B cell (primary cell): ENCODE measurements at regions of chr2 and their contacts with region 1.

Region 1: GRCh38 chr2:192675640-192676039 is 480.9 kb upstream of the TMEFF2 start:
- DNase-seq: no peak
- ATAC-seq: no peak
- H3K4me3 ChIP-seq: no peak overlapping the region
- H3K4me3 Mint-ChIP-seq: no peak overlapping the region
- H3K27ac ChIP-seq: no peak overlapping the region
- H3K27ac Mint-ChIP-seq: no peak overlapping the region
- H3K4me1 ChIP-seq: no peaks in the 10 kb centered on the region
- H3K4me1 Mint-ChIP-seq: no peaks in the 10 kb centered on the region
- H3K27me3 ChIP-seq: no peaks in the 10 kb centered on the region
- H3K27me3 Mint-ChIP-seq: no peaks in the 10 kb centered on the region
- CTCF ChIP-seq: no peak

Region 2: GRCh38 chr2:192634557-192634956 is 41.1 kb before region 1 on chr2:
- CTCF ChIA-PET with region 1: no interaction called
- POLR2A ChIA-PET with region 1: no interaction called
- intact Hi-C with region 1: loop called (anchors 1 kb)
- DNase-seq: no peak
- ATAC-seq: no peak
- H3K4me3 ChIP-seq: no peak overlapping the region
- H3K4me3 Mint-ChIP-seq: no peak overlapping the region
- H3K27ac ChIP-seq: no peak overlapping the region
- H3K27ac Mint-ChIP-seq: no peak overlapping the region
- H3K4me1 ChIP-seq: no peaks in the 10 kb centered on the region
- H3K4me1 Mint-ChIP-seq: no peaks in the 10 kb centered on the region
- H3K27me3 ChIP-seq: no peaks in the 10 kb centered on the region
- H3K27me3 Mint-ChIP-seq: no peaks in the 10 kb centered on the region
- CTCF ChIP-seq: no peak